AG04449 (cell line): ENCODE measurements at regions of chrX and their contacts with region 1.

Region 1: GRCh38 chrX:106894392-106894909 is 8.7 kb downstream of the RIPPLY1 start:
- DNase-seq: peak; percentile 31
- H3K4me3 ChIP-seq: no peak overlapping the region
- CTCF ChIP-seq: peak; percentile 72

Region 2: DNA sequence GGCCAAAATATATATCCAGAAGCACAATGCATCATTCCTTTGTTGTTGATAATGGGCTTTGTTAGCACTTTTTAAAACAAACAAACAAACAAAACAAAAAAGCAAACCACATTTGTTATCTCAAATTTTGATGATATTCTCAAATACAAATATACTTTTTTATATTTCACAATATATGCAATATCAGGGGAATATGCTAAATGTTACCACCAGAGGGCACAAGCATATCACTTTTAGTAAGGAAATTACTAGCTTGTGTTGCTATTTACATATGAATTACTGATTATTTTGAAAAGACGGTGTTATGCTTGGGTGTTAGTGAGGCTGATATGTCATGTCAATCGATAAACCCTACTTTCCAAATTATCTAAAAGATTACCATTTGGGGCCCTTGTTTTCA is 20.4 kb before region 1 on chrX:
- CTCF ChIA-PET with region 1: interaction called, 11 read pairs
- POLR2A ChIA-PET with region 1: no interaction called
- DNase-seq: no peak
- H3K4me3 ChIP-seq: no peak overlapping the region
- CTCF ChIP-seq: peak; percentile 18

Region 3: DNA sequence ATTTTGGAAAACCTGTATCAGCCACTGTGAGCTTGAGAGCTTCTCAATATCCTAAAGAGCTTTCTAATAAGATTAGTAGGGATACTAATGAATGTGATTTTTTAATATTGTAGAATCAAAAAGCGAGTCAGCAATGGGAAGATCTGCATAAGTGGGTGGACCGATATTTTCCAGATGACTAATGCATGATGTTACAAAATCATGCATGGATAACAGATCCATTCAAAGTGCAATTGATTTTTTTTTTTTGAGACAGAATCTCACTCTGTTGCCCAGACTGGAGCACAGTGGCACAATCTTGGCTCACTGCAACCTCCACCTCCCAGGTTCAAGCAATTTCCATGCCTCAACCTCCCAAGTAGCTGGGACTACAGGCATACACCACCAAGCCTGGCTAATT is 18.4 kb after region 1 on chrX:
- CTCF ChIA-PET with region 1: interaction called, 34 read pairs
- POLR2A ChIA-PET with region 1: no interaction called
- DNase-seq: no peak
- H3K4me3 ChIP-seq: no peak overlapping the region
- CTCF ChIP-seq: no peak

Region 4: DNA sequence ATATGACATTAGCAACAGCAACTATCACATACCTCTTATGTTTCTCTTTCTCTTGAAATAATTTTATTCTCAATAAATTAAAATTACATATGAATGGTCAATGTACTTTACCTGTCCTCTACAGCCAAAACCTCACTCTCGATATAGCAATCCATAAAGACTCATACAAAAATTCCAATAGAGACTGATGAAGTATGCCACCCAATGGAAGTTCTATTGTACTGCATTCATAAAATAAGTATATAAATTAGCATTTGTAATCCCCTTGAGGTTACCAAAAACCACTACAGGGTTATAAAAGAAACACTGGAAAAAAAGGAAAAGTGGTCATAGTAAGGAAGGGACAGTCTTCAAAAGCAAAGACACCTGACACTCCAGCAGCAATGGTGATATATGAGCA is 58.5 kb after region 1 on chrX:
- CTCF ChIA-PET with region 1: interaction called, 26 read pairs
- POLR2A ChIA-PET with region 1: no interaction called
- DNase-seq: no peak
- H3K4me3 ChIP-seq: no peak overlapping the region
- CTCF ChIP-seq: no peak

Region 5: GRCh38 chrX:106959901-106960300 is 65.5 kb after region 1 on chrX:
- CTCF ChIA-PET with region 1: interaction called, 55 read pairs
- POLR2A ChIA-PET with region 1: no interaction called
- DNase-seq: no peak
- H3K4me3 ChIP-seq: no peak overlapping the region
- CTCF ChIP-seq: no peak